HEK293 (cell line): ENCODE measurements at regions of chr1 and their contacts with region 1.

Region 1: DNA sequence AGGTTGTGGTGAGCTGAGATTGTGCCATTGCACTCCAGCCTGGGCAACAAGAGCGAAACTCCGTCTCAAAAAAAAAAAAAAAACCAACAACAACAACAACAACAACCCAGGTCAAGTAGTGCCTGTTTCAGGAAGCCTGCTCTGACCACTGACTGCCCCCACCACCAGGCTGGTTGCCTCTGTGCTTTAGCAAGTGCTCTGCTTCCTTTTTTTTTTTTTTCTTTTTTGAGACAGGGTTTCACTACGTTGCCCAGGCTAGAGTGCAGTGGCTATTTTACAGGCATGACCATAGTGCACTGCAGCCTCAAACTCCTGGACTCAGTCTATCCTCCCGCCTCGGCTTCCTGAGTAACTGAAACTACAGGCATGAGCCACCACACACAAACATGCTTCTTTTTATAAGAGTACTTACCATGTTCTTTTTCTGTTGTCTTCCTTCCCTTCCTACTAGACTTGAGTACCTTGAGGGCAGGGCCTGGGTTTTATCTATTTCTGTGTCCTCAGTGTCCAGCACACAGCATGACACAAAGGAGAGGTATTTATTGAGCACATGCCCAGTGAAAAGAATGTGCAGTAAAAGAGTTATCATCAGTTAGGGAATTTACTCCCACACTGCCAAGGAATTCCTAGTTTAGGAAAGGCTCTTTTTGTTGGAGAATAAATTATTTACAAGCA is 9.9 kb upstream of the COA7 start:
- H3K4me3 ChIP-seq: no peak overlapping the region
- H3K27ac ChIP-seq: no peak overlapping the region
- H3K4me1 ChIP-seq: no peaks in the 10 kb centered on the region
- CTCF ChIP-seq: no peak

Region 2: DNA sequence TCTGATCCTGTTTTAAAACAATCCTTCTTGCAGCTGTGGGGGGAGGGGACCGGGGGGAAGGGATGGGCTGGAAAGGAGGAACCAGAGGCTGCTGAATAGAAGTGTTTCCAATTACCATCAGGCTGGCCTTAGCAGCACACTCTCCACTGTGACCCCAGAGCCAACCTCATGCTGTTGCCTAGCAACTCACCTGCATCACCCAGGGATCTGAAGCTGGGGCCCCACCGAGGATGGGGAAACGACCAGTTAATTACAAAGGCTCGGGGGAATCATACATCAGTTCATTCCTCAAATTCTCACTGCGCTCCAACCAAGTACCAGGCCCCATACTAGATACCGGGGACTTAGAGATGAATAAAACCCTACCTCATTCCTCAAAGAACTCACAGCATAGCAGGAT is 117.8 kb before region 1 on chr1:
- CTCF ChIA-PET with region 1: no interaction called
- POLR2A ChIA-PET with region 1: no interaction called
- H3K4me3 ChIP-seq: no peak overlapping the region
- H3K27ac ChIP-seq: no peak overlapping the region
- H3K4me1 ChIP-seq: no peaks in the 10 kb centered on the region
- CTCF ChIP-seq: no peak

Region 3: DNA sequence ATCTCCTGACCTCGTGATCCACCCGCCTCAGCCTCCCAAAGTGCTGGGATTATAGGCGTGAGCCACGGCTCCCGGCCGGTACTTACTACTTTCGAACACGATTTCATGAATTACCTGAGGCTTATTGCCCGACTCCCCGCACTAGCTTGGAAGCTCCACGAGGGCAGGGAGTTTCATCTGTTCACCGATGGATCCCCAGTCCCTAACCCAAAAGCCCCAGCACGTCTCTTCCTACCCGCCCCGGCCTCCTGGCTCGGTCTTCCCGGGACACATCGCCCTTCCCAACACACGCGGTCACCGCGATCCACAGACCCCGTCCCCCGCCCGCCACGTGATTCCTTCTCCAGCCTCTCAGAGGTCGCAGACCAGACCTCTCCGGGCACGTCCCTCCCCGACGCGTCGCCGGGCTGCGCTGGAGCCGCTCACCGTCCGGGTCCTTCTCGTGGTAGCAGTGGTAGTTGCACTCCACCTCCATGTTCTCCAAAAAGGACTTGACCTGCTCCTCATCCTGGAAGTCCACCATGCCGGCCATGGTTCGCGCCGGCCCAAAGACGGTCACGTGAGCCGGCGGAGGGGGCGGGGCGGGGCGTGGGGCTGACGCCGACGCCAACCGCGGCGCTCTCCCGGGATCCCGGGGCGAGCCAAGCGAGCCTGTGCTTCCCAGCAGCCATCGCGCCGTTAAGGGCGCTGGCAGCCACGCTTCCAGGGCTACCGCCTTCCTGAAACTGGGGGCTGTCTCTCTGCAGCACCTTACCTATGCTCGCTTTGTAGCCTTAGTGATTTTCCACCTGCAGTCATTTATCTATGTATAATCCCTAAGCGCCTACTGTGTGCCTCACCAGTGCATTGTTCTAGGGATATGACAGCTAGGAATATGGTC is 10.0 kb before region 1 on chr1 and contains the start of gene COA7:
- CTCF ChIA-PET with region 1: interaction called, 4 read pairs
- POLR2A ChIA-PET with region 1: interaction called, 10 read pairs
- H3K4me3 ChIP-seq: peak within 1 kb of the TSS; percentile 79
- H3K27ac ChIP-seq: peak within 1 kb of the TSS; percentile 59; the same call in 1 of the 2 replicates
- H3K4me1 ChIP-seq: no peaks in the 10 kb centered on the region
- CTCF ChIP-seq: no peak